Activated naive CD8-positive, alpha-beta T cell treated with anti-CD3 and anti-CD28 coated beads, Interleukin-2, amount 10 ng/mL, durations not matched to agents 7 days and 5 days (primary cell): ENCODE measurements at regions of chr11 and their contacts with region 1.

Region 1: GRCh38 chr11:65546217-65546958 is 11.8 kb downstream of the LTBP3 start:
- DNase-seq: peak; percentile 100
- ATAC-seq: peak; percentile 81
- H3K4me3 Mint-ChIP-seq: peak overlapping the region; percentile 80
- H3K27ac Mint-ChIP-seq: peak overlapping the region; percentile 83
- H3K4me1 Mint-ChIP-seq: peaks cover 28% of the 10 kb centered on the region
- H3K27me3 Mint-ChIP-seq: no peaks in the 10 kb centered on the region

Region 2: DNA sequence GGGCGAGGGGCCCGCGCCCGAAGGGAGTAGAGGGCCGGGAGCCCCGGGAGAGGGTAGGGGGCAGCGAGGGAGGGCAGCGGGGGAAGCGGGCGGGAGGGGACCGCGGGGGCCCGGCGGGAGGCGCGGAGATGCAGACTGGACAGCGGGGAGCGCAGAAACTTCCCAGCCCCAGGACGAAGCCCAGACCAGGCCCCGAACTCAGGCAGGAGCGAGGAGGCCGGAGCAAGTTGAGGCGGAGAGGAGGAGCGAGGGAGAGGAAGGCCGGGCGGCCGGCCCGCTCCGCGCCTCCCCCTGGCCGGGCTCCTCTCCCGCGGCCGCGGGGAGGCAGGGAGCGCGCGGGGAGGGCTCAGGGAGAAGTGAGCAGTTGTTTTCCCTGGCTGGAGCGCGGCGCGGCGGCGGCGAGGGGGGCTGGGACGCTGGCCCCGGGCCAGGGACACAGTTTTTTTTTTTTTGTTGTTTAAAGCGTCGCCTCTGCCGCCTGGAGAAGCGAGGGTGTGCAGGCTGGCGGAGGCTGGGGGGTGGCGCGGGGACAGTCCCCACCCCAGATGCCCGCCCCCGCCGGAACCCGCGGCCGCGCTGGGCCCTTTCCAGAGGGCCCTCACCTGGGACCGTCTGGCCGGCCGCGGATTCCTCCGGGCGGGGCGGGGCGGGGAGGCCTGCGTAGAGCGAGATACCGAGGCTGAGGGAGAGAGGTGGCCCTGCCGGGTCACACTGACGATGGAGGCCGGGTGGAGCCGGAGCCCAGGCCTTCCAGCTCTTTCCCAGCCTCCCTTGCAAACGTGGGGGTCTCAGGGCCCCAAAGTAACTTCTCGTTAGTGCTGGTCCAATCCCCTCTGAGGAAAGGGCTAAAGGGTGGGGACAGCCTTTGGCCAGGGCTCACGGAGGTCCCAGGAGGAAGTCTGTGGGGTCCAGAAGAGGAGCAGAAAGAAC is 11.9 kb after region 1 on chr11 and contains the start of gene LTBP3:
- POLR2A ChIA-PET with region 1: interaction called, 26 read pairs
- DNase-seq: peak; percentile 61
- ATAC-seq: peak; percentile 37
- H3K4me3 Mint-ChIP-seq: peak within 1 kb of the TSS; percentile 86
- H3K27ac Mint-ChIP-seq: peak within 1 kb of the TSS; percentile 87
- H3K4me1 Mint-ChIP-seq: peaks cover 38% of the 10 kb centered on the region
- H3K27me3 Mint-ChIP-seq: no peaks in the 10 kb centered on the region
- total RNA-seq, gene LTBP3: 116 to 119 TPM